T-cell (primary cell): ENCODE measurements at regions of chr18 and their contacts with region 1.

Region 1: GRCh38 chr18:11845653-11846052 is 5.6 kb upstream of the CHMP1B start:
- DNase-seq: no peak
- ATAC-seq: no peak
- H3K4me3 ChIP-seq: no peak overlapping the region
- H3K4me3 Mint-ChIP-seq: no peak overlapping the region
- H3K27ac ChIP-seq: no peak overlapping the region
- H3K27ac Mint-ChIP-seq: no peak overlapping the region
- H3K4me1 ChIP-seq: peaks cover 4 to 8% of the 10 kb centered on the region in 2 experiments
- H3K4me1 Mint-ChIP-seq: peaks cover 14 to 19% (median 17%) of the 10 kb centered on the region in 3 donors
- H3K27me3 ChIP-seq: no peaks in the 10 kb centered on the region
- H3K27me3 Mint-ChIP-seq: no peaks in the 10 kb centered on the region

Region 2: GRCh38 chr18:11861583-11862288 is 16.1 kb after region 1 on chr18:
- CTCF ChIA-PET with region 1: interaction called in 1 of 2 experiments, 12 read pairs
- POLR2A ChIA-PET with region 1: no interaction called
- DNase-seq: no peak
- ATAC-seq: no peak
- H3K4me3 ChIP-seq: no peak overlapping the region
- H3K4me3 Mint-ChIP-seq: no peak overlapping the region
- H3K27ac ChIP-seq: no peak overlapping the region
- H3K27ac Mint-ChIP-seq: no peak overlapping the region
- H3K4me1 ChIP-seq: no peaks in the 10 kb centered on the region
- H3K4me1 Mint-ChIP-seq: peaks cover 5 to 11% (median 5%) of the 10 kb centered on the region in 3 donors
- H3K27me3 ChIP-seq: peaks cover 3 to 15% of the 10 kb centered on the region in 2 experiments
- H3K27me3 Mint-ChIP-seq: peaks cover 3 to 6% of the 10 kb centered on the region in 2 donors